ENCODE measurements at regions of chr1 and their contacts with region 1.

Region 1: DNA sequence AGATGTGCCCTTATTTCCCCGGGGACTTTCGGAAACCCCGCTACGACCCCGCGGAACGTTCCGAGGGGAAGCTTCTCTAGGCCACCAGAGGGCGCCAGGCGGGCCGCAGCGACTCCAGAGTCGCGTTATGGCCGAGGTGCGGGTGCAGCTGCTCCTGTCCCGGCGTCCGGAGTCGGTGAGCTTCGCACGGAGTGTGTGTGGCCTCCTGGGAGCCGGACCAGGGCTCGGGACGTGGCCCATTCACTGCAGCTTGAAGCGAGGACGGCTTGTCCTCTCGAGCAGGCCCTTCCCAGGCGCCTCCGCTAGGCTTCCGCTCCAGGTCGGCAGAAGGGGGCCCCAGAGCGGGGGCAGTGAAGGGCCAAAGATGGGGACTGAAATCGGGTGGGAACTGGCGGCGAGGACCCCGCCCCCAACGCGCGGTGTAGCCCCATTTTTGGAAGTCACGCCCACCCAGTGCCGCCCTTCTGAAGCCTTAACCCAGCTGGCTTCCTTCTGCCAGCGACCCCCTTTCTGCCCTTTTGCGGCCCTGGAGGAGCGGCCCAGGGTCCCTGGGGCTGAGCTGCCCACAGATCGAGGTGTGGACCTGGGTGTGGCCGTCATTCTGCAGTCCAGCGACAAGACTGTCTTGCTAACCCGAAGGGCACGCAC is at the start of gene NUDT17:
- DNase-seq: peak; percentile 41 to 87 (median 69)
- ATAC-seq: peak; percentile 80 to 84 (median 84)
- H3K4me3 ChIP-seq: peak within 1 kb of the TSS; percentile 69 to 75
- H3K4me3 Mint-ChIP-seq: no peak within 1 kb of the TSS
- H3K27ac ChIP-seq: peak within 1 kb of the TSS; percentile 26
- H3K27ac Mint-ChIP-seq: peak within 1 kb of the TSS in 1 of 2 donors; percentile 71
- H3K4me1 ChIP-seq: peaks cover 7 to 19% of the 10 kb centered on the region in 2 experiments
- H3K4me1 Mint-ChIP-seq: peaks cover 7 to 14% (median 12%) of the 10 kb centered on the region in 3 donors
- H3K27me3 ChIP-seq: no peaks in the 10 kb centered on the region
- H3K27me3 Mint-ChIP-seq: no peaks in the 10 kb centered on the region
- total RNA-seq, gene NUDT17: 2.8 to 7.6 (median 6.3) TPM

Region 2: GRCh38 chr1:145720877-145721671 is 124.6 kb before region 1 on chr1:
- CTCF ChIA-PET with region 1: no interaction called
- POLR2A ChIA-PET with region 1: no interaction called
- DNase-seq: peak; percentile 10 to 79 (median 60)
- ATAC-seq: peak; percentile 82 to 87 (median 86)
- H3K4me3 ChIP-seq: peak overlapping the region; percentile 47 to 49
- H3K4me3 Mint-ChIP-seq: peak overlapping the region; percentile 60 to 75 (median 65)
- H3K27ac ChIP-seq: no peak overlapping the region
- H3K27ac Mint-ChIP-seq: peak overlapping the region in 1 of 2 donors; percentile 49
- H3K4me1 ChIP-seq: peaks cover 0 to 49% of the 10 kb centered on the region in 2 experiments
- H3K4me1 Mint-ChIP-seq: peaks cover 10 to 30% (median 25%) of the 10 kb centered on the region in 3 donors
- H3K27me3 ChIP-seq: peaks cover 0 to 16% of the 10 kb centered on the region in 2 experiments
- H3K27me3 Mint-ChIP-seq: peaks cover 12 to 18% of the 10 kb centered on the region in 2 donors

Region 3: GRCh38 chr1:145823565-145824498 is 21.8 kb before region 1 on chr1 and contains the starts of genes POLR3C and RNF115:
- CTCF ChIA-PET with region 1: interaction called in 1 of 2 experiments, 11 read pairs
- POLR2A ChIA-PET with region 1: interaction called in 1 of 2 experiments, 4 read pairs
- DNase-seq: peak; percentile 78 to 92 (median 85)
- ATAC-seq: peak; percentile 96 to 98 (median 98)
- H3K4me3 ChIP-seq: peak within 1 kb of the TSS; percentile 97 to 99
- H3K4me3 Mint-ChIP-seq: peak within 1 kb of the TSS; percentile 98
- H3K27ac ChIP-seq: peak within 1 kb of the TSS; percentile 70
- H3K27ac Mint-ChIP-seq: peak within 1 kb of the TSS; percentile 96
- H3K4me1 ChIP-seq: peaks cover 14 to 20% of the 10 kb centered on the region in 2 experiments
- H3K4me1 Mint-ChIP-seq: peaks cover 25 to 38% (median 32%) of the 10 kb centered on the region in 3 donors
- H3K27me3 ChIP-seq: no peaks in the 10 kb centered on the region
- H3K27me3 Mint-ChIP-seq: no peaks in the 10 kb centered on the region
- total RNA-seq, gene POLR3C: 24.5 to 42.0 (median 38.2) TPM
- total RNA-seq, gene RNF115: 12.0 to 17.5 (median 13.4) TPM

Region 4: GRCh38 chr1:145906954-145907753 is 61.5 kb after region 1 on chr1:
- CTCF ChIA-PET with region 1: interaction called, 3 to 26 read pairs
- POLR2A ChIA-PET with region 1: interaction called in 1 of 2 experiments, 10 read pairs
- DNase-seq: no peak
- ATAC-seq: no peak
- H3K4me3 ChIP-seq: no peak overlapping the region
- H3K4me3 Mint-ChIP-seq: no peak overlapping the region
- H3K27ac ChIP-seq: no peak overlapping the region
- H3K27ac Mint-ChIP-seq: no peak overlapping the region
- H3K4me1 ChIP-seq: peaks cover 0 to 3% of the 10 kb centered on the region in 2 experiments
- H3K4me1 Mint-ChIP-seq: peaks cover 5 to 8% (median 6%) of the 10 kb centered on the region in 3 donors
- H3K27me3 ChIP-seq: no peaks in the 10 kb centered on the region
- H3K27me3 Mint-ChIP-seq: no peaks in the 10 kb centered on the region

Region 5: GRCh38 chr1:146007506-146008133 is 162.0 kb after region 1 on chr1:
- CTCF ChIA-PET with region 1: interaction called, 4 to 27 read pairs
- POLR2A ChIA-PET with region 1: no interaction called
- DNase-seq: no peak
- ATAC-seq: no peak
- H3K4me3 ChIP-seq: no peak overlapping the region
- H3K4me3 Mint-ChIP-seq: peak overlapping the region in 1 of 3 donors; percentile 68
- H3K27ac ChIP-seq: peak overlapping the region; percentile 81
- H3K27ac Mint-ChIP-seq: peak overlapping the region; percentile 83 to 87
- H3K4me1 ChIP-seq: peaks cover 14 to 42% of the 10 kb centered on the region in 2 experiments
- H3K4me1 Mint-ChIP-seq: peaks cover 40 to 54% (median 43%) of the 10 kb centered on the region in 3 donors
- H3K27me3 ChIP-seq: no peaks in the 10 kb centered on the region
- H3K27me3 Mint-ChIP-seq: no peaks in the 10 kb centered on the region